Mammary epithelial cell (primary cell): ENCODE measurements at regions of chr3 and their contacts with region 1.

Region 1: DNA sequence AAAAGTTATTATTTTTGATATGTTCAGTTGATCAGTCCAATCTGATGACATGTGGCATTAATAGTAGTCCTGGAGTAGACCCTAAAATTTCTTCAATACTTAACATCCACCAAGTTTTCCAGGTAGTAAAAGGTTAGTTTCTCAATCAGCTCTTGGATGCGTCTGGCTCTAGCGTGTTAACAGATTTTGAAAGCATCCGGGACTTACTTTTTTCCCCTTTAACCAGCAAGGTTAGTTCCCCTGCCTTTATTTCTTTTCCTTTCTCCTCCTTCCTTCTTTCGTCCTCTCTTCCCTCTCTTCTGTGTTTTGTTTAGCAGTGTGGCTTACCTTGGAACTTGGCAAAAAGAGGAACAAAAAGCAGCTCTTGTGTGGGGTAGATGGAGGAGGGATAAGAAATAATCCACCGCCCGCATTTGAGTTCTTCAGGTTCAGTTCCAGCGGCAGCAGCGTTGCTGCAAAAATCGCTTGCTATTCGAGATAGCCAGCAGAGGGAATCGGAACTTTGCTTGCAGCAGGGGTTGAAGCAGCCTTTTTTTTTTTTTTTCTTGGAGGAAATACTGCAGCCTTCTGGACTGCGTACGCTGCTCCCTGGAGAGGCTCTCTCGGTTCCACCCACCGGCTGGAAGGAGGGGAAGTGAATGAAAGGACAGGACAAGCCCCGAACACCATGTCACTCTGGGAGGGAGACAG is at the start of gene RBMS3:
- DNase-seq: peak; percentile 91
- H3K4me3 ChIP-seq: peak within 1 kb of the TSS; percentile 59 to 76 (median 69)
- H3K27ac ChIP-seq: peak within 1 kb of the TSS; percentile 93
- H3K4me1 ChIP-seq: peaks cover 4% of the 10 kb centered on the region
- H3K27me3 ChIP-seq: no peaks in the 10 kb centered on the region
- CTCF ChIP-seq: peak; percentile 30 to 68
- total RNA-seq, gene RBMS3: 31.5 to 51.5 TPM

Region 2: GRCh38 chr3:28916713-28917499 is 363.6 kb before region 1 on chr3:
- CTCF ChIA-PET with region 1: interaction called, 8 read pairs
- dilution Hi-C with region 1: no loop called
- in situ Hi-C with region 1: loop called in 1 of 2 experiments (anchors 10 kb)
- intact Hi-C with region 1: loop called (anchors 1 kb)
- DNase-seq: peak; percentile 52
- H3K4me3 ChIP-seq: peak overlapping the region in 1 of 3 experiments; percentile 15
- H3K27ac ChIP-seq: peak overlapping the region; percentile 23
- H3K4me1 ChIP-seq: peaks cover 9% of the 10 kb centered on the region
- H3K27me3 ChIP-seq: no peaks in the 10 kb centered on the region
- CTCF ChIP-seq: peak; percentile 66 to 81

Region 3: DNA sequence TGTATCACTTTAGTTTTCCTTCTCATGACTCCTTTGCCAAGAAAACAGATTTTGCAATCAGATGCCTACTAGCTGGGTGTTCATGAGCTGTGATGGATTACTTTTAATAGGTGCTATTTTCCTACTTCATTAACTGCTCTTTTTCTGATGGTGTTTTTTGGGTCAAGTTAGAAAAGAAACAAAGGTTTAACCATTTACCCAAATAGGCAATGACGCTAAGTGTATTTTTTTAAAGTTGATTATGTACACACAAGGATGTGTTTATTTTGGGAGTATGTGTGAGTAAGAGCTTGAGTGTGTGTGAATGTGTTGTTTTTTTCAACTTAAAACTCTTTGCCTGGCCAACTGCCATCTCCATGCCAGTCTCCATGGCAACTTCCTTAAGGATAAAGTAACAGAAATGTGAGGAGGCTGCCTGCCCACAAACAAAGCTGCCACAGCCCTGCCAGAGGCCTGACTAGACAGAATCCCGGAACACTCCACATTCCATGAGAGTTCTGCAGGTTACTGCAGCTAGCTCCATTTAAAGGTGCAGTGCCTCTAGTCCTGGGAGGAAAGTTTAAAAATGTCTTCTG is 215.3 kb before region 1 on chr3:
- CTCF ChIA-PET with region 1: no interaction called
- dilution Hi-C with region 1: no loop called
- in situ Hi-C with region 1: no loop called
- intact Hi-C with region 1: loop called (anchors 1 kb)
- DNase-seq: peak; percentile 99
- H3K4me3 ChIP-seq: no peak overlapping the region
- H3K27ac ChIP-seq: peak overlapping the region; percentile 78
- H3K4me1 ChIP-seq: peaks cover 11% of the 10 kb centered on the region
- H3K27me3 ChIP-seq: no peaks in the 10 kb centered on the region
- CTCF ChIP-seq: no peak

Region 4: DNA sequence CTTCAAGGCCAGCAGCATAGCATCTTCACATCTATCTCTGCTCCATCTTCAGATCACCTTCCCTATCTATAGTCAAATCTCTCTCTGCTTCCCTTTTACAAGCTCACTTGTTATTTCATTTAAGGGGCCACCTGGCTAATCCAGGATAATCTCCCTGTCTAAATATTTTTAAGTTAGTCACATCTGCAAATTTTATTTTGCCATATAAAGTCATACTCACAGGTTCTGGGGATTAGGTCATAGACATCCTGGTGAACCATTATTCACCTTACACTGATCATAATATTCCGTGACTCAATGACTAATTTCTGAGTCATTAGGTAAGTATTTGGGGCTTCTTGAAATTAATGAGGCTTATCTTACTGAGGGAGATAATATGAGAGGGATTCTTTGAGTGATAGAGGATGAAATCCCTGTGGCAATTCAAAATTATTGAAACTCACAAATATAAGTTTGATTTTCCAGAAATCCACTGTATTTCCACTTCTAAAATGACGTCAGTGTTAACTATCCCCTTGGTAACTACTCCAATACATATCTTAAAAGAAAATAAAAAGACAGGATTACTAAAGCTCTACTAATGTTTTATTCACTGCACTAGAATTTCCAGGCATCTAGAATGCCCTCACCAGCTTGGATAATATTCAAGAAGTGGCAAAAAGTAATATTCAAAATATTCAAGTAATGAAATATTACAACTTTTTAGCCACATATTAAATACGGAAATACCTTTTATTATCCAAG is 93.4 kb before region 1 on chr3:
- CTCF ChIA-PET with region 1: no interaction called
- dilution Hi-C with region 1: no loop called
- in situ Hi-C with region 1: no loop called
- intact Hi-C with region 1: loop called (anchors 2 kb)
- DNase-seq: peak; percentile 94
- H3K4me3 ChIP-seq: no peak overlapping the region
- H3K27ac ChIP-seq: peak overlapping the region; percentile 87
- H3K4me1 ChIP-seq: peaks cover 27% of the 10 kb centered on the region
- H3K27me3 ChIP-seq: no peaks in the 10 kb centered on the region
- CTCF ChIP-seq: no peak

Region 5: GRCh38 chr3:29515451-29515850 is 234.9 kb after region 1 on chr3:
- CTCF ChIA-PET with region 1: interaction called, 5 read pairs
- dilution Hi-C with region 1: no loop called
- in situ Hi-C with region 1: no loop called
- intact Hi-C with region 1: loop called (anchors 10 kb)
- DNase-seq: peak; percentile 75
- H3K4me3 ChIP-seq: no peak overlapping the region
- H3K27ac ChIP-seq: no peak overlapping the region
- H3K4me1 ChIP-seq: peaks cover 30% of the 10 kb centered on the region
- H3K27me3 ChIP-seq: no peaks in the 10 kb centered on the region
- CTCF ChIP-seq: no peak

Region 6: DNA sequence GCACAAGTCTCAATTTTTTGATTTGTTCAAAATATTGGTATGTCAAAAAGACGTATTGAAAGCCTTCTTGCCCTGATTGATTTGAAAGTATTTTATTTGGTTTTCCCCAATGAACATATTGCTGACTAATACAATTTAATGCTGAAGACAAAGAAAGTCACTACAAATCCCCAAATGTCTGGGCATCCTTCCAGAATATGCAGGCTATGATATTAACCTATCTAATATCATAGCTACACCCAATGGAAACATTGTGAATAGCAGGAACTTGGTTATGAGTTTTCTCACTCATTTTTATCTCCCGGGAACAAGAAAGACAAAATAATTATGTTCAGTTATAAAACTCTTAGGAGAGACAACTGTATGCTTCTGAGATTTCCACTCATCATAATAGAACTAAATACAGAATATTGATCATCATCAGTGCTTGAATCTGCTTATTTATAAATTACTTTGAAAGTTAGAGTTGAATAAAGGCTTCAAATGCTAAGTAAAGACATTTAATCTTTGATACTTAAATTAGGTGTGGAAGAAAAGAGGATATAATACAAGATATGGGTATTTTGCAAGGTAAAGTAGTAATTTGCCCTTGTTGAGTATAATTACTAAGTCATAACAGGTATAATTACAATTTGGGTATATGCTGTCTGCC is 484.2 kb after region 1 on chr3:
- CTCF ChIA-PET with region 1: no interaction called
- dilution Hi-C with region 1: no loop called
- in situ Hi-C with region 1: loop called (anchors 5 to 25 kb)
- intact Hi-C with region 1: loop called (anchors 1 kb)
- DNase-seq: peak; percentile 70
- H3K4me3 ChIP-seq: no peak overlapping the region
- H3K27ac ChIP-seq: no peak overlapping the region
- H3K4me1 ChIP-seq: peaks cover 7% of the 10 kb centered on the region
- H3K27me3 ChIP-seq: no peaks in the 10 kb centered on the region
- CTCF ChIP-seq: peak; percentile 87 to 90